ENCODE measurements at regions of chr2 and their contacts with region 1.

Region 1: GRCh38 chr2:181104512-181105115 is 124.2 kb downstream of the UBE2E3 start:
- DNase-seq: peak in 7 of 9 donors; percentile 14 to 66 (median 54)
- ATAC-seq: peak; percentile 64
- H3K4me3 ChIP-seq: no peak overlapping the region
- H3K4me3 Mint-ChIP-seq: peak overlapping the region in 7 of 10 donors; percentile 0 to 27 (median 11)
- H3K27ac ChIP-seq: no peak overlapping the region
- H3K27ac Mint-ChIP-seq: peak overlapping the region in 7 of 9 donors; percentile 4 to 35 (median 27)
- H3K4me1 ChIP-seq: peaks cover 30 to 34% of the 10 kb centered on the region in 2 donors
- H3K4me1 Mint-ChIP-seq: peaks cover 11 to 48% (median 37%) of the 10 kb centered on the region in 7 donors
- H3K27me3 ChIP-seq: no peaks in the 10 kb centered on the region
- H3K27me3 Mint-ChIP-seq: peaks cover 0 to 4% (median 3%) of the 10 kb centered on the region in 5 donors

Region 2: DNA sequence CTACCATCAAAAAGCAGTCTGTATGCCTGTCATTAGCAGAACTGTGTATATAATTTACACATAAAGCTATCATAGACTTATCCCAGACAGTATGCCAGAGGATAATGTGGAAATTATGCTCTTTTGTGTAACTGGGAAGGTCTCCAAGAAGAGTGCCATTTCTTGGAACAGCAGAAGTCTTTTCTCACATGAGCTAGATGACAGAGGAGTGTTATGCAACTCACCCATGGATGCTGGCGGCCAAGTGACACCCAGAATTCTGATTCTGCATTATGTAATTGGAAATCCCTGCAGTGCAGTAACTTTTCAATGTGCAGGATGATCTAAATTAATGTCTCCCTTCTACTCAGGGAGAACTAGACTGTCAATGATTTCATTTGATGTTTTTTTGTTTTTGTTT is 35.8 kb after region 1 on chr2:
- CTCF ChIA-PET with region 1: interaction called, 34 read pairs
- POLR2A ChIA-PET with region 1: interaction called, 4 read pairs
- intact Hi-C with region 1: loop called (anchors 1 kb)
- DNase-seq: peak in 1 of 9 donors; percentile 29
- ATAC-seq: peak; percentile 30
- H3K4me3 ChIP-seq: peak overlapping the region; percentile 20
- H3K4me3 Mint-ChIP-seq: peak overlapping the region; percentile 31 to 94 (median 86)
- H3K27ac ChIP-seq: peak overlapping the region; percentile 78
- H3K27ac Mint-ChIP-seq: peak overlapping the region; percentile 93 to 100 (median 98)
- H3K4me1 ChIP-seq: peaks cover 46 to 66% of the 10 kb centered on the region in 2 donors
- H3K4me1 Mint-ChIP-seq: peaks cover 33 to 83% (median 75%) of the 10 kb centered on the region in 7 donors
- H3K27me3 ChIP-seq: no peaks in the 10 kb centered on the region
- H3K27me3 Mint-ChIP-seq: no peaks in the 10 kb centered on the region

Region 3: GRCh38 chr2:181239201-181239799 is 134.7 kb after region 1 on chr2:
- CTCF ChIA-PET with region 1: interaction called, 4 read pairs
- POLR2A ChIA-PET with region 1: interaction called, 4 read pairs
- intact Hi-C with region 1: loop called in 1 of 2 experiments (anchors 2 kb)
- DNase-seq: peak in 3 of 9 donors; percentile 13 to 37 (median 20)
- ATAC-seq: no peak
- H3K4me3 ChIP-seq: no peak overlapping the region
- H3K4me3 Mint-ChIP-seq: peak overlapping the region in 1 of 10 donors; percentile 58
- H3K27ac ChIP-seq: no peak overlapping the region
- H3K27ac Mint-ChIP-seq: peak overlapping the region in 5 of 9 donors; percentile 4 to 66 (median 45)
- H3K4me1 ChIP-seq: peaks cover 9 to 14% of the 10 kb centered on the region in 2 donors
- H3K4me1 Mint-ChIP-seq: peaks cover 18 to 61% (median 58%) of the 10 kb centered on the region in 7 donors
- H3K27me3 ChIP-seq: no peaks in the 10 kb centered on the region
- H3K27me3 Mint-ChIP-seq: no peaks in the 10 kb centered on the region

Region 4: DNA sequence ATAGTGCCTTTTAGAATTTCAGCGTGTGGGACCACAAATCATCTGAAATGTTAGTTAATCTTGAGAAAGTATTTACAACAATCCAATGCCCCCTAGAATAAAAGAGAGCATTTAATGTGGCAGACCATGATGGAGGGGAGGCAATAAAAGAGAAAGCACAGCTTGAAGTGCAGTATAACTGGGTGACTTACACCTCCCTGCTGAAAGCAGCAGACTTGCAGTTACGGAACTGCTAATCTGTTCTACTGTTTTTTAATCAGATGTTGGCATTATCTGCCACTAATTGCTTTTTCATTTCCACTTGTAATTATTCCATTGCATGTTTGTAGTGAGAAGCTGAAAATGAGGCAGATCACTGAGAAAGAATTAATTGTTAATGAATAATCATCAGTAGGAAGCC is 222.0 kb after region 1 on chr2:
- CTCF ChIA-PET with region 1: no interaction called
- POLR2A ChIA-PET with region 1: no interaction called
- intact Hi-C with region 1: loop called in 1 of 2 experiments (anchors 1 kb)
- DNase-seq: no peak
- ATAC-seq: no peak
- H3K4me3 ChIP-seq: no peak overlapping the region
- H3K4me3 Mint-ChIP-seq: no peak overlapping the region
- H3K27ac ChIP-seq: no peak overlapping the region
- H3K27ac Mint-ChIP-seq: peak overlapping the region in 2 of 9 donors; percentile 3 to 58
- H3K4me1 ChIP-seq: no peaks in the 10 kb centered on the region
- H3K4me1 Mint-ChIP-seq: peaks cover 6 to 18% (median 11%) of the 10 kb centered on the region in 7 donors
- H3K27me3 ChIP-seq: no peaks in the 10 kb centered on the region
- H3K27me3 Mint-ChIP-seq: no peaks in the 10 kb centered on the region

Region 5: DNA sequence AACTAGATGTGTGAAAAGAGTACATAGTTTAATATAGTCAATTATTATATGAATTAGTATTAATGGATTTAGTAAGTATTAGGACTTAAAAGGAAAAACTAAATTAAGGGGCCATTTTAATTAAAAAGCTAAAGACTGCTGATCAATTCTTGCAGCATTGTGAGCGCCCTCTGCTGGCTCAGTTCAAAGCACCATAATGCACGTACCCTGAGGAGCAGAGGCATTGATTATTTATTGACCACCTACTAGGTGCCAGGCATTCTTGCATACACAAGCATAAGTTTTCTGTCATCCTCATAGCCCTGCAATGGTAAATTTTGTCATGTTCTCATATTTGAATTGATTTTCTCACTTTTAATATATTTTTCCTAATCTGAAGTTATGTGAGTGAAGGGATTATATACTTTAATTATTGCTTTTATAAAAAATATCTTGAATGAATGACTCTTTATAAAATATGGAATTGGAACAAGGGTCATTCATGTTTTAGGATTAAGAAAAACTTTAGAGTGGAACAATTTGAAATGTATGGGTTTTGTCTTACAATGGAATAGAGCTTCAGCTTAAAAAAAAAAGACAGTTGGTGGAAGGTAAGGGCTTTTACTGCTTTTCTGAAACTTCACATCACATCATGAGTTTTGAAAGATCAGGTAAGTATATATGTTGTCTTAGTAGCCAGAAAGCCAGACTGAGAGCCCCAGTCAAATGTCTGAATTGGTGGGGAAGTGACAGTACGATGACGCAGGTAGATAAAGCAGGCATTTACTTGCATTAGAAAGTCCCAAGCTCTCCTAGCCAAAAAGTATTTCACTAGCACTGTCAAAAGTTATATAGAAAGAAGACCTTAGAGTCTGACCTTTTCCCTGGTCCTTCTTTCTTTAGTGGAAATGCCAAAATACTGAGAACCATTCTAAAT is 362.3 kb after region 1 on chr2:
- CTCF ChIA-PET with region 1: interaction called, 43 read pairs
- POLR2A ChIA-PET with region 1: interaction called, 8 read pairs
- intact Hi-C with region 1: loop called (anchors 1 kb)
- DNase-seq: peak; percentile 53 to 69 (median 61)
- ATAC-seq: peak; percentile 68
- H3K4me3 ChIP-seq: no peak overlapping the region
- H3K4me3 Mint-ChIP-seq: peak overlapping the region in 9 of 10 donors; percentile 49 to 76 (median 65)
- H3K27ac ChIP-seq: peak overlapping the region; percentile 65
- H3K27ac Mint-ChIP-seq: peak overlapping the region; percentile 59 to 95 (median 87)
- H3K4me1 ChIP-seq: peaks cover 53 to 71% of the 10 kb centered on the region in 2 donors
- H3K4me1 Mint-ChIP-seq: peaks cover 55 to 92% (median 90%) of the 10 kb centered on the region in 7 donors
- H3K27me3 ChIP-seq: no peaks in the 10 kb centered on the region
- H3K27me3 Mint-ChIP-seq: no peaks in the 10 kb centered on the region

Measured in naive thymus-derived CD4-positive, alpha-beta T cell (primary cell).